Panc1 (cell line): ENCODE measurements at regions of chr4 and their contacts with region 1.

Region 1: GRCh38 chr4:159102622-159103383 is at the start of gene RAPGEF2:
- DNase-seq: no peak
- ATAC-seq: peak; percentile 94
- H3K4me3 ChIP-seq: peak within 1 kb of the TSS; percentile 74 to 77
- H3K27ac ChIP-seq: peak within 1 kb of the TSS; percentile 51
- H3K4me1 ChIP-seq: peaks cover 14% of the 10 kb centered on the region
- H3K27me3 ChIP-seq: no peaks in the 10 kb centered on the region
- CTCF ChIP-seq: no peak
- total RNA-seq, gene RAPGEF2: 17.6 TPM

Region 2: GRCh38 chr4:157514711-157515110 is 1588.1 kb before region 1 on chr4:
- CTCF ChIA-PET with region 1: no interaction called
- POLR2A ChIA-PET with region 1: no interaction called
- in situ Hi-C with region 1: no loop called
- intact Hi-C with region 1: no loop called
- DNase-seq: no peak
- ATAC-seq: no peak
- H3K4me3 ChIP-seq: no peak overlapping the region
- H3K27ac ChIP-seq: no peak overlapping the region
- H3K4me1 ChIP-seq: no peaks in the 10 kb centered on the region
- H3K27me3 ChIP-seq: no peaks in the 10 kb centered on the region
- CTCF ChIP-seq: 0 out of 2 replicates have a peak, but pooled peaks have one; percentile 4

Region 3: DNA sequence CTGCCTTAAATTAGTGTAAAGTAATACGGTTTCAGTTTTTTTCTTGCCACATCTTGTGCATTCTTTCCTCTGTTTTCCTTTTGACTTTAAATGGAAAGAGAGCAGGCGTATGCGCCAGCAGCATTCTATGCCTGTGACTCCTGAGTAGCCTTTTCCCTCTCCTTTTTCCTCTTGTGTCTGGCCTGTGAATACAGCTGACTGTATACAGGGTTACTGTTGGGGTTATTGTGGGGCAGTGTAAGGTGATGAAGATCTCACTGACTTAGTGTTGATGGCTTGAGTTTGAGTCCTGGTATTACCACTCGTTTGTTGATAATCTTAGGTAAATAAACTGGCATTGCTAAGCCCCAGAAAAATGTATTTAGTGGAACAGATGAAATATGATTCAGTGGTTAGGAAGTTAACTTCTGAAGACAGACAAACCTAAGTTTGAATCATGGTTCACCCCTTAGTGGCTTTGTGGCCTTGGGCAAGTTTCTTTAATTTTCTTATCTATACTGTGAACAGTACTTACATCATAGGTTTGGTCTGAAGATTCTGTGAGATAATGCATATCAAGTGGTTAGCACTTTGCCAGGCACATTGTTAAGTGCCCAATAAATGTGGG is 228.9 kb before region 1 on chr4:
- CTCF ChIA-PET with region 1: no interaction called
- POLR2A ChIA-PET with region 1: no interaction called
- in situ Hi-C with region 1: no loop called
- intact Hi-C with region 1: loop called (anchors 10 kb)
- DNase-seq: peak; percentile 79
- ATAC-seq: peak; percentile 93
- H3K4me3 ChIP-seq: no peak overlapping the region
- H3K27ac ChIP-seq: no peak overlapping the region
- H3K4me1 ChIP-seq: no peaks in the 10 kb centered on the region; the same call in none of the 2 replicates
- H3K27me3 ChIP-seq: no peaks in the 10 kb centered on the region
- CTCF ChIP-seq: no peak

Region 4: DNA sequence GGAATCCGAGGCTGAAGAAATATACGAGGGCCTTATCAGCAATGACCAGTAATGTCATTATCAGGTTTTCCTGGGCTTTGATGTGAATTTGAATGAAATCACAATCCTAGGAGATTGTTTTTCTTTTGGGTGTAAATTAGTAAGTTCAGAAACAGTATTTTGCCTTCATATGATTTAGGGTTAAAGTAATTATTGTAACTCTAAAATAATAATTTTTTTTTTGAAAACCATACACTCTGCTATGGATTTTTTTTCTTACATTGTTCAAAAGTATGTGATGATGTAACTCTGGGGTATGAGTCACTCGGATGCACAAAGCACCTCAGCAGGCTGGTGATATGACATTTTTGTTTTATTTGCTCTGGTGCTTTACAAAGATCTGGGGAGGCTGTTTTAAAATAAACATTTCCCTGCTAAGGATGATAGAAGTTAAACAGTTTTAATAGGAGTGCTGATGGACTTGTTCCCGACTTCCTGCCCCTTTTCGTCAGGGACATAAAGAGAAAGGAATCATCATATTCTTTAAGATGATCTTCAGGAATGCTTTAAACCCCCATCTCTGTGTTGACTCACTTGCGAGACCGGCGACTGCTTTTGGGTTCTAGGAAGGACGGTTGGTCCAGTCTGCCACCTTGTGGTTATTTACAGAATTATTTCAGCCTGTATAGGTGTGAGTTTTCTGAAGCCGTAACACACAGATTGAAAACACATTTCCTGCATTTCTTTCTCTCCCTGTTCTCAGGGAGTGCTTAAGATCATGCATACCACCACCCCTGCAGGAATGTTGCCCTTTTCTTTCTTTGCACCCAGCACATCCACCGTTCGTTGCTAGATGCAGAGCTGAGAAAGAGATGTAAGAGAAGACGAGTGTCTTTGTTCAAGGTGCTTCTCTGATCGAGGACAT is 72.5 kb after region 1 on chr4:
- CTCF ChIA-PET with region 1: no interaction called
- POLR2A ChIA-PET with region 1: no interaction called
- in situ Hi-C with region 1: no loop called
- intact Hi-C with region 1: loop called (anchors 10 kb)
- DNase-seq: peak; percentile 74
- ATAC-seq: peak; percentile 99
- H3K4me3 ChIP-seq: peak overlapping the region in 1 of 2 experiments; percentile 19; a peak in 2 of 4 replicates
- H3K27ac ChIP-seq: peak overlapping the region; percentile 57; the same call in 1 of the 2 replicates
- H3K4me1 ChIP-seq: peaks cover 3% of the 10 kb centered on the region; the same call in 1 of the 2 replicates
- H3K27me3 ChIP-seq: no peaks in the 10 kb centered on the region
- CTCF ChIP-seq: peak; percentile 81